CD4-positive, alpha-beta memory T cell (primary cell): ENCODE measurements at regions of chr22 and their contacts with region 1.

Region 1: DNA sequence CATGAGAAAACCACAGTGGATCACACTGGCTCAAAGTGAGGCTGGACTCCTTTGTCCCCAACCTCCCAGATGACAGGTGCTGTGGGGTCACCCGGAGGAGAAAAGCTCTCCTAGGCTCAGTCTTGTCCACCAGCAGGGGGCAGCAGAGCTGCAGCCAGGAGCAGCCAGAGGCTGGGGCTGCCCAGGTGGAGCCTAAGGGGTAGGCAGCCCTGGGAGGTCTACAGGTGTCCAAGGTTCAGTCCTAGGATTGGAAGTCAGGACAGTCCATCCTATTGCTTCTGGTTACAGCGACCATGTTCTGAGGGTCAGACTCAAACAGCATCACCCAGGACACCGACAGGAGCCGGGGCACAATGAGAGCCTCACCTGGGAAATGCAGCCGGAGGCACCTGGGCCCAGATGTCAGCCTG is 77.6 kb upstream of the IGLL5 start:
- DNase-seq: peak; percentile 76 to 82 (median 76)
- H3K4me3 ChIP-seq: no peak overlapping the region
- H3K4me3 Mint-ChIP-seq: peak overlapping the region in 4 of 8 donors; percentile 12 to 53 (median 44)
- H3K27ac ChIP-seq: no peak overlapping the region
- H3K27ac Mint-ChIP-seq: peak overlapping the region in 6 of 7 donors; percentile 67 to 91 (median 80)
- H3K4me1 ChIP-seq: peaks cover 26% of the 10 kb centered on the region
- H3K4me1 Mint-ChIP-seq: peaks cover 40 to 79% (median 57%) of the 10 kb centered on the region in 4 donors
- H3K27me3 ChIP-seq: no peaks in the 10 kb centered on the region
- H3K27me3 Mint-ChIP-seq: no peaks in the 10 kb centered on the region

Region 2: DNA sequence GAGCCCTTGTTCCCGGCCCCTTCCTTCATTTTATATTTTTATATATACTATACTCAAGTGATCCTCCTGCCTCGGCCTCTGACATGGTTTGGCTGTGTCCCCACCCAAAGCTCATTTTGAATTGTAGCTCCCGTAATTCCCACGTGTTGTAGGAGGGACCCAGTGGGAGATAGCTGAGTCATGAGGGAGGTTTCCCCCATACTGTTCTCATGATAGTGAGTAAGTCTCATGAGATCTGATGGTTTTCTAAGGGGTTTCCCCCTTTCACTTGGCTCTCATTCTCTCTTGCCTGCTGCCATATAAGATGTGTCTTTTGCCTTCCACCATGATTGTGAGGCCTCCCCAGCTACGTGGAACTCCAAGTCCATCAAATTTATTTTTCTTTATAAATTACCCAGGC is 282.7 kb before region 1 on chr22:
- CTCF ChIA-PET with region 1: no interaction called
- POLR2A ChIA-PET with region 1: no interaction called
- intact Hi-C with region 1: no loop called
- DNase-seq: no peak
- H3K4me3 ChIP-seq: no peak overlapping the region
- H3K4me3 Mint-ChIP-seq: no peak overlapping the region
- H3K27ac ChIP-seq: no peak overlapping the region
- H3K27ac Mint-ChIP-seq: no peak overlapping the region
- H3K4me1 ChIP-seq: no peaks in the 10 kb centered on the region
- H3K4me1 Mint-ChIP-seq: no peaks in the 10 kb centered on the region
- H3K27me3 ChIP-seq: no peaks in the 10 kb centered on the region
- H3K27me3 Mint-ChIP-seq: peaks cover 10 to 25% of the 10 kb centered on the region in 2 donors

Region 3: GRCh38 chr22:22687638-22688500 is 122.2 kb before region 1 on chr22:
- CTCF ChIA-PET with region 1: no interaction called
- POLR2A ChIA-PET with region 1: no interaction called
- intact Hi-C with region 1: no loop called
- DNase-seq: peak in 3 of 5 donors; percentile 14 to 19 (median 15)
- H3K4me3 ChIP-seq: no peak overlapping the region
- H3K4me3 Mint-ChIP-seq: no peak overlapping the region
- H3K27ac ChIP-seq: no peak overlapping the region
- H3K27ac Mint-ChIP-seq: peak overlapping the region in 1 of 7 donors; percentile 64
- H3K4me1 ChIP-seq: no peaks in the 10 kb centered on the region
- H3K4me1 Mint-ChIP-seq: no peaks in the 10 kb centered on the region
- H3K27me3 ChIP-seq: no peaks in the 10 kb centered on the region
- H3K27me3 Mint-ChIP-seq: no peaks in the 10 kb centered on the region

Region 4: GRCh38 chr22:22770280-22770871 is 39.6 kb before region 1 on chr22:
- CTCF ChIA-PET with region 1: interaction called, 31 read pairs
- POLR2A ChIA-PET with region 1: interaction called, 4 read pairs
- intact Hi-C with region 1: no loop called
- DNase-seq: peak; percentile 20 to 46 (median 30)
- H3K4me3 ChIP-seq: no peak overlapping the region
- H3K4me3 Mint-ChIP-seq: no peak overlapping the region
- H3K27ac ChIP-seq: no peak overlapping the region
- H3K27ac Mint-ChIP-seq: peak overlapping the region in 5 of 7 donors; percentile 2 to 72 (median 23)
- H3K4me1 ChIP-seq: no peaks in the 10 kb centered on the region
- H3K4me1 Mint-ChIP-seq: peaks cover 10 to 28% (median 19%) of the 10 kb centered on the region in 4 donors
- H3K27me3 ChIP-seq: no peaks in the 10 kb centered on the region
- H3K27me3 Mint-ChIP-seq: peaks cover 3 to 4% of the 10 kb centered on the region in 2 donors

Region 5: GRCh38 chr22:22848364-22848866 is 38.4 kb after region 1 on chr22:
- CTCF ChIA-PET with region 1: interaction called, 560 read pairs
- POLR2A ChIA-PET with region 1: interaction called, 250 read pairs
- intact Hi-C with region 1: loop called (anchors 1 kb)
- DNase-seq: peak; percentile 52 to 72 (median 57)
- H3K4me3 ChIP-seq: no peak overlapping the region
- H3K4me3 Mint-ChIP-seq: peak overlapping the region in 4 of 8 donors; percentile 32 to 49 (median 40)
- H3K27ac ChIP-seq: no peak overlapping the region
- H3K27ac Mint-ChIP-seq: peak overlapping the region in 5 of 7 donors; percentile 42 to 70 (median 61)
- H3K4me1 ChIP-seq: peaks cover 12% of the 10 kb centered on the region
- H3K4me1 Mint-ChIP-seq: peaks cover 31 to 55% (median 45%) of the 10 kb centered on the region in 4 donors
- H3K27me3 ChIP-seq: no peaks in the 10 kb centered on the region
- H3K27me3 Mint-ChIP-seq: peaks cover 0 to 1% of the 10 kb centered on the region in 2 donors

Region 6: DNA sequence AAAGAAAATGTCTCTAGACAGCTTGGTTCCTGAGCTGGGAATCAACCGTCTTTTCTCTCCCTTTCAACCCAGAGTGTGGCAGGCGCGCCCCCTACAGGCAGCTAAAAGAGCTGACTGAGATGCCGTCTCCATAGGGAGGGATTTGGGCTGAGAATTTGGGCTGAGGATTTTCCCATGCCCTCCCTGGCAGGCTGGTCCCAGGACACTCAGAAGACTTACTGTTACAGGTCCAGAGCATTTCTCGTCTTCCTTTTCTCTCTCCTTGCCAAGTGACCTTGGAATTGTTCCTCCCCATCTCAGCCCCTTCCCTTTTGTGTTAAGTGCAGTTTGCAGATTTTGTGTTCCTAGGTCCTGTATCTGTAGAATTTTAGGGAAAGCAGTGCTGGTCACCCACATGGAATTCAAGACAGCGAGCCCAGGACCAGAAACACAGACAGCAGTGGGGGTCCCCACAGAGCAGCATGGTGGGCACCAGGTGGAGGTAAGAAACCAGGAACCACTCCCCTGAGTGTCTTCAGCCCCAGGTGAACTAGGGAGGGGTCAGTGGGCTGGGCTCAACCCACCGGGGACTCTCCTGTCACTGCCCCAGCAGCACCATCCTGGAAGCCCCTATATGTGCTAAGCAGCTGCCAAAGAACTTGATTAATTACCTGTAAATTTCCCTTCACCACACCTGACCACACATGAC is 67.6 kb after region 1 on chr22:
- CTCF ChIA-PET with region 1: interaction called, 431 read pairs
- POLR2A ChIA-PET with region 1: interaction called, 27 read pairs
- intact Hi-C with region 1: loop called (anchors 1 kb)
- DNase-seq: peak; percentile 72 to 74 (median 73)
- H3K4me3 ChIP-seq: no peak overlapping the region
- H3K4me3 Mint-ChIP-seq: no peak overlapping the region
- H3K27ac ChIP-seq: no peak overlapping the region
- H3K27ac Mint-ChIP-seq: peak overlapping the region in 2 of 7 donors; percentile 42 to 76
- H3K4me1 ChIP-seq: no peaks in the 10 kb centered on the region
- H3K4me1 Mint-ChIP-seq: peaks cover 0 to 5% (median 2%) of the 10 kb centered on the region in 4 donors
- H3K27me3 ChIP-seq: no peaks in the 10 kb centered on the region
- H3K27me3 Mint-ChIP-seq: no peaks in the 10 kb centered on the region